Right ventricle myocardium superior (tissue), 1 donor: ENCODE measurements at regions of chr12 and their contacts with region 1.

Region 1: GRCh38 chr12:67413578-67413977 is 144.4 kb downstream of the CAND1 start:
- DNase-seq: no peak
- ATAC-seq: no peak

Region 2: GRCh38 chr12:67034492-67034891 is 379.1 kb before region 1 on chr12:
- intact Hi-C with region 1: no loop called
- DNase-seq: no peak
- ATAC-seq: no peak

Region 3: GRCh38 chr12:67355578-67356379 is 57.8 kb before region 1 on chr12:
- intact Hi-C with region 1: loop called (anchors 5 kb)
- DNase-seq: no peak
- ATAC-seq: peak; percentile 75

Region 4: GRCh38 chr12:67452119-67452805 is 38.7 kb after region 1 on chr12:
- intact Hi-C with region 1: no loop called
- DNase-seq: no peak
- ATAC-seq: no peak

Region 5: GRCh38 chr12:67472539-67472938 is 59.0 kb after region 1 on chr12:
- intact Hi-C with region 1: no loop called
- DNase-seq: peak; percentile 47
- ATAC-seq: peak; percentile 97